Activated CD4-positive, alpha-beta memory T cell treated with anti-CD3 and anti-CD28 coated beads for 36 hours (primary cell): ENCODE measurements at regions of chr20 and their contacts with region 1.

Region 1: DNA sequence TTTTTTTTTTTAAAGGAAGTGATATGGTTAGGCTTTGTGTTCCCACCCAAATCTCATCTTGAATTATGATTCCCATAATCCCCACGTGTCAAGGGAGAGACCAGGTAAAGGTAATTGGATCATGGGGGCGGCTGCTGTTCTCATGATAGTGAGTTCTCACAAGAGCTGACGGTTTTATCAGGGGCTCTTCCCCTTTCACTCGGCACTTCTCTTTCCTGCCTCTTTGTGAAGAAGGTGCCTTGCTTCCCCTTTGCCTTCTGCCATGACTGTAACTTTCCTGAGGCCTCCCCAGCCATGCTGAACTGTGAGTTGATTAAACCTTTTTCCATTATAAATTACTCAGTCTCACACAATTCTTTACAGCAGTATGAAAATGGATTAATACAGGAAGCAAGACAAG is 64.3 kb downstream of the ZFP64 start:
- DNase-seq: no peak
- H3K4me3 Mint-ChIP-seq: no peak overlapping the region
- H3K27ac Mint-ChIP-seq: no peak overlapping the region
- H3K4me1 Mint-ChIP-seq: no peaks in the 10 kb centered on the region
- H3K27me3 Mint-ChIP-seq: no peaks in the 10 kb centered on the region

Region 2: DNA sequence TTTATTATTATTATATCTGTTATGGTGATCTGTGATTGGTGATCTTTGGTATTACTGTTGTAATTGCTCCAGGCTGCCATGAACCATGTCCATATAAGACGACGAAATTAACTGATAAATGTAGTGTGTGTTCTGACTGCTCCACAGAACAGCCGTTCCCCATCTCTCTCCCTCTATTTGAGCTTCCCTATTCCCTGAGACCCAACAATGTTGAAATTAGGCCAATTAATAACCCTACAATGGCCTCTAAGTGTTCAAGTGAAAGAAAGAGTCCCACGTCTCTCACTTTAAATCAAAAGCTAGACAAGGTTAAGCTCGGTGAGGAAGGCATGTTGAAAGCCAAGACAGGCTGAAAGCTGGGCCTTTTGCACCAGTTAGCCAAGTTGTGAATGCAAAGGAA is 12.7 kb after region 1 on chr20:
- CTCF ChIA-PET with region 1: interaction called, 16 read pairs
- POLR2A ChIA-PET with region 1: no interaction called
- intact Hi-C with region 1: no loop called
- DNase-seq: no peak
- H3K4me3 Mint-ChIP-seq: no peak overlapping the region
- H3K27ac Mint-ChIP-seq: no peak overlapping the region
- H3K4me1 Mint-ChIP-seq: no peaks in the 10 kb centered on the region
- H3K27me3 Mint-ChIP-seq: no peaks in the 10 kb centered on the region

Region 3: DNA sequence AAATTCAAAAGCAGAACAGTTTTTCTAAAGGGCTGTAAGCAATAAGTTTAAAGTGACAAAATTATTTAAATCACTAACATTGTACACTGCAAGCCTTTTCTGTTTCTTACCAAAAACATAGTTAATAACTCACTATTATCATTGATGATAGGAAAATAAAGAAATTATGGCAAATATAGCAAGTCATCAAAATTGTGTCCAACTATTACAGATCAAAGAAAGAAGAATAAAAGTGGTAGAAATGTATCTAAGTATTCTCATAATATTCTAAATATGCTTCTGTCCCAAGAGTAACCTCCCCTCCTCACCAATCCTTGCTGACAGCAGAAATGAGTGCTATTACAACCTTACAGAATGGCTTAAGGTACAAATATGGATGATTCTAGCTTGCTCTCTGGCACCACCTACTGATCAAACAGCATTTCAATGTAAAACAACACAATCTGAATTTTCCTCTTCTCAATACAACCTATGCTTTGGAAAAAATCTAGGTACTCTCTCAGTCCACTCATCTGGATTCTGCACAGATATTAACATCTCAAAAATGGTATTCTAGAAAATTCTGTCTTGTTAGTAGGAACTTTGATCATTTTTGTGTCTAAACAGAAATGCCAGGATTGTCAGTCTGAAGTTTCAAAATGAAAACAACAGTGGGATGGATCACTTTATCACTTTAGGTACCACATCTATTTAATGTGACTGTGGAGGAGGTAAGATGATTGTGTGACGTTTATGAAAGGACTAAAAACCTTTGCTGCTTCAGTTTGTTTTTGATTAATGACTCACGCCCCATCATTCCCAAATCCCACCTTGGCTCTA is 23.3 kb after region 1 on chr20:
- CTCF ChIA-PET with region 1: interaction called, 25 read pairs
- POLR2A ChIA-PET with region 1: no interaction called
- intact Hi-C with region 1: no loop called
- DNase-seq: no peak
- H3K4me3 Mint-ChIP-seq: no peak overlapping the region
- H3K27ac Mint-ChIP-seq: no peak overlapping the region
- H3K4me1 Mint-ChIP-seq: peaks cover 5% of the 10 kb centered on the region
- H3K27me3 Mint-ChIP-seq: no peaks in the 10 kb centered on the region

Region 4: DNA sequence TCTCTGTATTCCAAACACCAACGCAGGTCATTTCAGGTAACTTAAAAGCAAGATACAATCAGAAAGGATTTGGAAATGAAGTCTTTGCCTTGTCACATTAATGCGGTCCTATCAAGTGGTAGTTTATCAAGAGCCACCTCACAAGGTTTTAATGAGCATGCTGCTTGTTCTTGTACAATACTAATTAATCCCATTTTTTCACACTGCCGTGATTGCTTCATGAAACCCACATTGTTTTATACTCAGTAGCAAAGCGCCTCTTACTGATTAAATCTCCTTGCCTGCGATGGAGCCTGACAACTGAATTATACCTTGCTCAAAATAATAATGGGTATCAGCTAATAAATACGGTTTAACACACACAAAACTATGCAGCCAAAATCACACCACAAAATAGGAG is 610.8 kb after region 1 on chr20:
- CTCF ChIA-PET with region 1: no interaction called
- POLR2A ChIA-PET with region 1: no interaction called
- intact Hi-C with region 1: no loop called
- DNase-seq: no peak
- H3K4me3 Mint-ChIP-seq: no peak overlapping the region
- H3K27ac Mint-ChIP-seq: no peak overlapping the region
- H3K4me1 Mint-ChIP-seq: no peaks in the 10 kb centered on the region
- H3K27me3 Mint-ChIP-seq: peaks cover 2% of the 10 kb centered on the region